ENCODE measurements at regions of chr15 and their contacts with region 1.

Region 1: DNA sequence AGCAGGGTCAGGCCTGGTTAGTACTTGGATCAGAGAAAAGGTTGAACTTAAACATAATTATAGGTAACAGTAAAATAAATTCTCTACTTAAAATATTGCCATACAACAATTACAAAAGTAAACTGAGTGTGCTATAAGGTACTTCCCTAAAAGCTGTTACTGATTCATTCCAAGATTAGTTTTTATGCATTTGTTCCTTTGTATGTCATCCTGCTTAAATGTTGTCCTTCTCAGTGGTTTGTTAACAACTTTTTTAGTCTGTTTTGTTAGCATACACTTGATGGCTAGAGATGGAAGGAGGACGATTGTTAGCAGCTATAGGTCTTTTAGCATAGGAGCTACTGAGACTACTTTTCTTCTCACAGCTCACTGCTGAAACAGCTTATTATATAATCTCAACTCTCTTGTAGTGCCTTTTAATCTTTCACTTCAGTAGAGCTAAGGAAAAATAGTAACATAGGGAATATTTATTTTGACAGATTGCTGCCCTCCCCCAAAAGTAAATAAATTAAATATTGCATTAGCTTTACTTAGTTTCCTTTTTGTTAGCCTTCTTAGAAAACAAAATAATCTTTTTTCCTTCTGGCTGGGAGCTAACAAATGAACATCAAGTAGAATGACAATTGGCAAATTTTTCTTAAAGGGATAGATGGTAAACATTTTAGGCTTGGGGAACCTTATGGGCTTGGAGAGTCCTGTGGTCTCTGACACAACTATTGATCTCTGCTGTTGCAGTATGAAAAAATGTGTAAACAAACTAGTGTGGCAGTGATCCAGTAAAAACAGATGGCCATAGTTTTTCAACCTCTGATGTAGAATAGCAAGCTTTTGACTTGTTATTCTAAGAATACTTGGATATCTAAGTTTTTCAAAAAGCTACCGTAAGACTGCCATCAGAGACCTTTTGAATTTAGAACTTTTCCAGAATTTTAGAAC is 39.5 kb downstream of the USP8 start:
- DNase-seq: no peak
- ATAC-seq: no peak
- H3K4me3 ChIP-seq: no peak overlapping the region
- H3K4me3 Mint-ChIP-seq: no peak overlapping the region
- H3K27ac ChIP-seq: no peak overlapping the region
- H3K27ac Mint-ChIP-seq: no peak overlapping the region
- H3K4me1 ChIP-seq: no peaks in the 10 kb centered on the region
- H3K4me1 Mint-ChIP-seq: peaks cover 2% of the 10 kb centered on the region
- H3K27me3 ChIP-seq: no peaks in the 10 kb centered on the region
- H3K27me3 Mint-ChIP-seq: no peaks in the 10 kb centered on the region
- CTCF ChIP-seq: no peak

Region 2: GRCh38 chr15:50452927-50453326 is 10.8 kb before region 1 on chr15:
- CTCF ChIA-PET with region 1: no interaction called
- POLR2A ChIA-PET with region 1: no interaction called
- intact Hi-C with region 1: loop called in 1 of 2 experiments (anchors 2 kb)
- DNase-seq: no peak
- ATAC-seq: no peak
- H3K4me3 ChIP-seq: no peak overlapping the region
- H3K4me3 Mint-ChIP-seq: no peak overlapping the region
- H3K27ac ChIP-seq: no peak overlapping the region
- H3K27ac Mint-ChIP-seq: peak overlapping the region; percentile 25
- H3K4me1 ChIP-seq: no peaks in the 10 kb centered on the region
- H3K4me1 Mint-ChIP-seq: peaks cover 9% of the 10 kb centered on the region
- H3K27me3 ChIP-seq: no peaks in the 10 kb centered on the region
- H3K27me3 Mint-ChIP-seq: no peaks in the 10 kb centered on the region
- CTCF ChIP-seq: no peak

Region 3: DNA sequence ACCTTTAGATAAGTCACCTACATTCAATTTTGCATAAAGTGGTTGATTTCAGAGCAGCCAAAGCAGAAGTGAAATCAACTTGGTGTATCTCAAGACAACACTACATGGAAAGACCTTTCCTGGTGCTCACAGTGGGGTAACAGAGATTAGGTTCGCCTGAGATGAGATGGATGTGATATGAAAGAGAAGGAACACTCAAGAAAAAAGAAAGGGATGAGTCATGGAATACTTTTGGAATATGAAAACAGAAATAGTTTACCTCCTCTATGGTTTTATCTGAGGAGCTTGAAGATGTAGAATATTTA is 391.4 kb after region 1 on chr15:
- CTCF ChIA-PET with region 1: no interaction called
- POLR2A ChIA-PET with region 1: no interaction called
- intact Hi-C with region 1: no loop called
- DNase-seq: no peak
- ATAC-seq: no peak
- H3K4me3 ChIP-seq: no peak overlapping the region
- H3K4me3 Mint-ChIP-seq: no peak overlapping the region
- H3K27ac ChIP-seq: no peak overlapping the region
- H3K27ac Mint-ChIP-seq: no peak overlapping the region
- H3K4me1 ChIP-seq: no peaks in the 10 kb centered on the region
- H3K4me1 Mint-ChIP-seq: no peaks in the 10 kb centered on the region
- H3K27me3 ChIP-seq: no peaks in the 10 kb centered on the region
- H3K27me3 Mint-ChIP-seq: peaks cover 2% of the 10 kb centered on the region
- CTCF ChIP-seq: no peak